Activated naive CD4-positive, alpha-beta T cell treated with anti-CD3 and anti-CD28 coated beads for 36 hours (primary cell): ENCODE measurements at regions of chr11 and their contacts with region 1.

Region 1: GRCh38 chr11:19742588-19743292 is 30.1 kb downstream of the NAV2 start:
- DNase-seq: peak; percentile 81
- H3K4me3 Mint-ChIP-seq: no peak overlapping the region
- H3K27ac Mint-ChIP-seq: no peak overlapping the region
- H3K4me1 Mint-ChIP-seq: no peaks in the 10 kb centered on the region
- H3K27me3 Mint-ChIP-seq: peaks cover 2% of the 10 kb centered on the region

Region 2: DNA sequence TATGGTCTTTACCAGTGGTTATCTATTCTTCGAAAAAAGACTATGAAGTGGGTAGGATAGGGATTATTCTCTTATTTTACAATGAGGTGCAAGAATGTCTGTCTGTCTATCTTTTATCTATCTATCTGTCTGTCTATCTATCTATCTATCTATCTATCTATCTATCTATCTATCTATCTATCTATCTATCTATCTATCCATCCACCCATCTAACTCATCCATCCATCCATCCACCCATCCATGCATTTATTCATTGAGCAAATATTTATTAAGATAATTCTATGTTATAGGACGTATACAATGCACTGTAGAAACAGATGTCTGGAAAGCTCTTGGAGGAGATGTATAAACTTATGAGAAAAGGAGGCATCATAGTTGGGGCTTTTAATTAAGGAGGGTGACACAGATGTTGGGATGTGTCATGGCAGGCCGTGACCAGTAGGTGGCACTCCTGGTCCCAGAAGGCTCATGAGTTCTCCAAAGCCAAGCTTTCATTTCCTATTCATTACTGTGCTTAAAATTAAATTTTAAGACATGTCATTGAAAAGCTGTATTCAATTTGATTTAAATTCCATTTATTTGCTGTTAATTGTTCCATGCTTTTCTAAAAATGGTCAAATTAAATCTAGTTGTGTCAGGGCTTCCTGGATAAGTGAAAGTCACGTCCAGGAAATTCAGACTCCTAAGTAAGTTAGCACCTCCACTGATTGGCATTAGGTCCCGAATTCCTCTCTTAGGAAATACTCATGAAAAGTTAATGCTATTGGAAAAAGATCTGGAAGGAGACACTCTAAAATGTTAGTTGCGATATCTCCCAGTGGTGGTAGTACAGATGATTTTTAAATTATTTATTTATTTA is 483.0 kb before region 1 on chr11:
- CTCF ChIA-PET with region 1: no interaction called
- intact Hi-C with region 1: loop called (anchors 5 kb)
- DNase-seq: peak; percentile 82
- H3K4me3 Mint-ChIP-seq: no peak overlapping the region
- H3K27ac Mint-ChIP-seq: no peak overlapping the region
- H3K4me1 Mint-ChIP-seq: no peaks in the 10 kb centered on the region
- H3K27me3 Mint-ChIP-seq: peaks cover 7% of the 10 kb centered on the region

Region 3: DNA sequence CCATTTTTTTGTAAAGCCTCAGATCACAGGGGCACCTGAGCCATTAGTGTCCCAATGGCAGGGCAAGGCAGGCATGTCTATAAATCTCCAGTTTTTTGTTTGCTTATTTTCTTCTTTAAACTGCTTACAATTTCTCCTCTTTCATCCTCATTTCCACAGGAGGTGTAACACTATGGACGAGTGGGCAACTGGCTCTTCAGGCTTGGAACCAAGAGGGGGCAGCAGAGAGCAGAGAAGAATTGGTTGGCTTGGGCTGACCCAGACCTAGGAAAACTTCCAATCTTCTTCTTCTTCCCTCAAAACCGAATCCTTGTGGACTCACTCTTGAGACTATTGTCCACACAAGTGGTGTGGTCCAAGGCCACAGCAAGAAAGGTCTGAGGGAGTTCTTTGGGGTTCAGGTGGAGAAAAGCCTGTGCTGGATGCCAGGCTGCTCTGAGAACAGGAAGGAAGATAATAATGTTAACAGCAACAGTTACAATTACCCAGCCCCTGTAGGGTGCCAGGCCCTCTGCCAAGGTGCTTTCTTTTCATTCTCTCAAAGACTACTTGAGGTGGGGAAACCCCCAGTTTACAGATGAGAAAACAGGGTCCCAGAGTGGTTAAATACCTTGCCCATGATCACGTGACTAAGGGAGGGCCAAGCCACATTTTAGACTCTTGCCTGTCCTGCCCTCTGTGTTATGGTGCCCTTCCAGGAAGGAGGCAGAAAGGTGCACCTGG is 431.3 kb before region 1 on chr11:
- CTCF ChIA-PET with region 1: no interaction called
- intact Hi-C with region 1: loop called (anchors 10 kb)
- DNase-seq: peak; percentile 60
- H3K4me3 Mint-ChIP-seq: no peak overlapping the region
- H3K27ac Mint-ChIP-seq: no peak overlapping the region
- H3K4me1 Mint-ChIP-seq: no peaks in the 10 kb centered on the region
- H3K27me3 Mint-ChIP-seq: no peaks in the 10 kb centered on the region

Region 4: DNA sequence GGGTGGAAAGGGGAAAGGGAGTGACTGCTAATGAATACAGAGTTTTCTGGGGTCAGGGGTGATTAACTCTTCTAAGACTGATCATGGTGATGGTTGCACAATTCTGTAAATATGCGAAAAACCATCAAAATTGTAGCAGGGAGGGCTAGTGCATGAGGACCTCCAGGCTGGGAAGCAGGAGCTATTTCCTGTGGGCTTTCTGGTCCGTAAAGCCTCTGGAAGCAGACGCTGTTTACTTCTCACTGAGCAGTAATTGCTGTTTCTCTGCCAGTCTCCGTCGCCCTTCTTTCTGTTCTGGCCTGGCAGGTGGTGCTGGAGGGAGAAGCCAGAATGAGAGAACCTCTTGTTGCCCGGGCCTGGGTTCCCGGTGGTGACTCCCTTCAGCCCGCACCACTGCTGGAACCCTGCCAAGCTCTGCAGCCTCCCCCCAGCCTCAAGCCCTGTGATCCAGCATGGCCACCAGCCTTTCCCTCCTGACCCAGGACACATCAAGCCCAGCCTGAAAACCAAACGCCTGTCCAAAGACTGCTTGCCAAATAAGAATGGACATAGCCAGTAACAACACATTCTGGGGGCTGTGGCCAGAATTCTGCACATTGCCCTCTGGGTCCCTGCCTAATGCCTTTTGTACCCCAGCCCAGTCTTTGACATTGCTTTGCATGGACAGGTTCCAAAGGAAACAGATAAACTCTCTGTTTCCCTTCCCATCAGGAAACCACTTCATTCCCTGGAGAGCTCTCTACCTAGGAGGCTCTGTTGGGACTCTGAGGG is 231.1 kb before region 1 on chr11:
- CTCF ChIA-PET with region 1: no interaction called
- intact Hi-C with region 1: no loop called
- DNase-seq: no peak
- H3K4me3 Mint-ChIP-seq: no peak overlapping the region
- H3K27ac Mint-ChIP-seq: no peak overlapping the region
- H3K4me1 Mint-ChIP-seq: no peaks in the 10 kb centered on the region
- H3K27me3 Mint-ChIP-seq: peaks cover 17% of the 10 kb centered on the region

Region 5: DNA sequence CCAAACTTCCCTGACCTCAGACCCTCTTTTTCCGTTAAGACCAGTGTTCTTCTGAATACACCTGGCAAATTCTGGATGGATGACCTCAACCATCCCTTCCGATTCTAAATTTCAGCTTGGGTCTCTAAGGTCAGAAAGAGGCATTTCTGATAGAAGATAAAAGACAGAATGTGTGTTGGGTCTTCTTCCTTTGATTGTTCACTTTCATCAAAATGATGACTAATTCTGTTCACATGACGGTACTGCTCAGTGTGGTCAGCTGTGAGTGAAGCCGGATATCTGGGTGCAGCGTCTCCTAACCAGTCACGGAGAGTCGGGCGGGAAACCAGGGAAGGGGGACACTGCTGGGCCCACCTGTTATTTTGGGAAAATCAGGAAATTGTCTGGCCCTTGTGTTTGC is 181.7 kb before region 1 on chr11:
- CTCF ChIA-PET with region 1: interaction called, 55 read pairs
- intact Hi-C with region 1: loop called (anchors 1 kb)
- DNase-seq: no peak
- H3K4me3 Mint-ChIP-seq: no peak overlapping the region
- H3K27ac Mint-ChIP-seq: no peak overlapping the region
- H3K4me1 Mint-ChIP-seq: no peaks in the 10 kb centered on the region
- H3K27me3 Mint-ChIP-seq: peaks cover 17% of the 10 kb centered on the region

Region 6: GRCh38 chr11:19698493-19699292 is 44.0 kb before region 1 on chr11:
- CTCF ChIA-PET with region 1: no interaction called
- intact Hi-C with region 1: no loop called
- DNase-seq: no peak
- H3K4me3 Mint-ChIP-seq: no peak overlapping the region
- H3K27ac Mint-ChIP-seq: no peak overlapping the region
- H3K4me1 Mint-ChIP-seq: no peaks in the 10 kb centered on the region
- H3K27me3 Mint-ChIP-seq: peaks cover 8% of the 10 kb centered on the region

Region 7: DNA sequence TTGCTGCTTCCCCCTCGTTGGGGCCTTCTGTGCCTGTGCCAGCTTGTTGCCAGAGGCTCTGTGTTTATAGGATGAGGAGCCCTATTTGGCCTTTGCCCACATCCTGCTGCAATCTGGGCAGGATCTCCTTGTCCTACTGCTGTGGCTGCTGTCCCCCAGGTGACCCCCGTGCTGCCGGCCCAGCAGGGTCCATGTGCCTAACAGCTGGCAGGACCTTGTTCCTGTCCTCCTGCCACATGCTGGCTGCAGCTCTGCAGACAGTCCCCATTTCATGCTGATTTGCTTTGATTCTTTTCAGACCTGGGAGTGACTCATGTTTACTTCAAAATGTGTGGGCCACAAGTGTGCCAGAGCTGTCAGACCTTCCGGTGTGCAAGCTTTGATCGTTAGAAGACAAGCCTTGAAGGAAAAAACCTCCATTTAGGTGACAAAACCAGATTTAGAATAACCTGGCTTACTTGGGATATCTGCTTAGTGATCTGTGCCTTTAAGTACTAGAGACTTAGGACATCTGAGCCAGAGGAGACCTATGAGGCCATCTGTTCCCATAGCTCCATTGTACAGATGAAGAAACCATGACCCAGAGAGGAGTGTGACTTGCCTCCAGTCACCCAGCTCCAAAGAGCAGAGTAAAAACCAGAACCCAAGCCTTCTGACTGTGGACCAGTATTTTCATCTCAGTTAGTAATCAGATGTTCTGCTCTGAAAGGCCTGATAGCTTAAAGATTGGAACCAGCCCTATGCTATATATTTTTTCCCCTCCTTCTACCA is 19.0 kb before region 1 on chr11:
- CTCF ChIA-PET with region 1: interaction called, 13 read pairs
- intact Hi-C with region 1: no loop called
- DNase-seq: peak; percentile 69
- H3K4me3 Mint-ChIP-seq: no peak overlapping the region
- H3K27ac Mint-ChIP-seq: peak overlapping the region; percentile 84
- H3K4me1 Mint-ChIP-seq: peaks cover 23% of the 10 kb centered on the region
- H3K27me3 Mint-ChIP-seq: no peaks in the 10 kb centered on the region

Region 8: DNA sequence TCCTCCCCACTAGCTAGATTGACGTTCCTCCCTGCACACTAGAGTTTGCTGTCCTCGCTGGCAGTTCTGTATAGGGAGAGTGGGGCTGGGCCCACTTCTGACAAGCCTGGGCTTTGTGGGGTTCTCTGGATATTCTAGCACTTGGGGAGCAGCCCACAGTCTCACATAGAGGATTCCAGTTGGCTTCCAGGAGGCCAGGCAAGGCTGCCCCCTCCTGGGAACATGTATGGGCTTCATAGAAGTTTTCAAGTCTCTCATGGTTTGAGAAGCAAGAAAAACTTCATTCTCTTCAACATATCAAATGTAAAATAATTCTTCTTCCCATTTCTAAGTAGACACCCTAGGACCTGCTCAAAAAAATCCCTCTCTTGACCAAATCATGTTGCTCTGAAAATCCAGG is 57.4 kb after region 1 on chr11:
- CTCF ChIA-PET with region 1: no interaction called
- intact Hi-C with region 1: no loop called
- DNase-seq: no peak
- H3K4me3 Mint-ChIP-seq: no peak overlapping the region
- H3K27ac Mint-ChIP-seq: no peak overlapping the region
- H3K4me1 Mint-ChIP-seq: no peaks in the 10 kb centered on the region
- H3K27me3 Mint-ChIP-seq: peaks cover 8% of the 10 kb centered on the region

Region 9: DNA sequence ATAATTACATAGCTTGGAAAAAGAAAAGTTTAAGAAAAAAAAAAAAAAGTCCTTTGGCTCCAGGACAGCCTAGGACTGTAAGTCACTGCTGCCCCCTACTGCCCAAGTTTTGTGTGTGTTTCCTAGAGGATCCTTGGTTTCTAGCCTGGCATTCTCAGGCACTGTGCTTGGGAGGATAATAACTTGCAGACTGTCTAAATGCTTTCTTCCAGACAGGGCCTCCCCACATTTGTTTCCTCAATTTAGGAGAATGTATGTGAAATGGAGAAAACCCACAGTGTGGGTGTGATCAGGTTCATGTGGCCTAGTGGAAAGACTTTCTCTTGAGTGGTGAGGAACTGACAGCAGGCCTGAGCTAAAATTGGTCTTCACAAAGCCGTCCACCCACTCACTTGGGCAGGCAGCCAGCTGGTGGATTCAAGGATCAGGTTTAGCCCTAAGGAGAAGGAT is 160.9 kb after region 1 on chr11:
- CTCF ChIA-PET with region 1: interaction called, 3 read pairs
- intact Hi-C with region 1: loop called (anchors 1 kb)
- DNase-seq: peak; percentile 76
- H3K4me3 Mint-ChIP-seq: no peak overlapping the region
- H3K27ac Mint-ChIP-seq: no peak overlapping the region
- H3K4me1 Mint-ChIP-seq: no peaks in the 10 kb centered on the region
- H3K27me3 Mint-ChIP-seq: no peaks in the 10 kb centered on the region